ENCODE measurements at regions of chr11 and their contacts with region 1.

Region 1: GRCh38 chr11:72585762-72586311 is 88.4 kb downstream of the PDE2A start:
- DNase-seq: peak; percentile 60 to 75 (median 69)
- H3K4me3 ChIP-seq: no peak overlapping the region
- H3K27ac ChIP-seq: no peak overlapping the region
- H3K4me1 ChIP-seq: no peaks in the 10 kb centered on the region
- H3K27me3 ChIP-seq: no peaks in the 10 kb centered on the region
- CTCF ChIP-seq: peak; percentile 78 to 91 (median 89)
- EP300 ChIP-seq: no peak
- POLR2A ChIP-seq: peak; percentile 21

Region 2: DNA sequence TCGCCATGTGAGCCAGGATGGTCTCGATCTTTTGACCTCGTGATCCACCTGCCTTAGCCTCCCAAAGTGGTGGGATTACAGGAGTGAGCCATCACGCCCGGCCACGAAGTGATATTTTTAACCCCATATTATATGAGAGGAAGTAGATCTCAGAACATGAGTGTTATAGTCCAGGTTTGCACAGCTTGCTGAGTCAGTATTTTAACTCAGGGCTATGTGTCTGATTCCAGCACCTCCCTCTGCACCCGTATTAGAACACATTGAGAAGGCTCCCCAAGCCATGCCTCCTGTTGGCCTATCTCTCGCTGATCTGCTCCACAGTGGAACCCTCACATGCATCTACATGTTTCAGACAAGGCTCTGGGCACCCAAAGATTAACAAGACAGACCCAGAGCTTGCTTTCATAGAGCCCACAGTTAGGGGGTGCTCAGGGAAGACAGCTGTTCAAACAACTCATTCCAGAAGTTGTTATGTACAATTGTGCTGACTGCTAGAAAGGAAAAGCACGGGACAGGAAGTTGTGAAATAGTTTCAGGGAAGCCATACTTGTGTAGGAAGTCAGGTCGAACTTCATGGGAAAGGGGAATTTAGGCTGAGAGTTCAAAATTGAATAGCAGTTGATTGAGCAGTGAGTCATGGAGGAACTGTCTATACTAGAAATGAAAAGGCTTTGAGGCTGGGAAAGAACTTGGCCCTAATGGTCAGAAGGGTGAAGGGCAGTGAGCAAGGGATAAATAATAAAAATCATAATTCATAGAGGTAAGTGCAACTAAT is 102.2 kb before region 1 on chr11:
- intact Hi-C with region 1: loop called in 1 of 4 experiments (anchors 10 kb)
- DNase-seq: no peak
- H3K4me3 ChIP-seq: no peak overlapping the region
- H3K27ac ChIP-seq: no peak overlapping the region
- H3K4me1 ChIP-seq: no peaks in the 10 kb centered on the region
- H3K27me3 ChIP-seq: no peaks in the 10 kb centered on the region
- CTCF ChIP-seq: no peak
- EP300 ChIP-seq: peak; percentile 25
- POLR2A ChIP-seq: no peak

Region 3: GRCh38 chr11:72511393-72512047 is 74.3 kb before region 1 on chr11:
- intact Hi-C with region 1: no loop called
- DNase-seq: no peak
- H3K4me3 ChIP-seq: no peak overlapping the region
- H3K27ac ChIP-seq: no peak overlapping the region
- H3K4me1 ChIP-seq: no peaks in the 10 kb centered on the region
- H3K27me3 ChIP-seq: no peaks in the 10 kb centered on the region
- CTCF ChIP-seq: no peak
- EP300 ChIP-seq: no peak
- POLR2A ChIP-seq: no peak

Region 4: GRCh38 chr11:72642884-72643511 is 57.2 kb after region 1 on chr11:
- intact Hi-C with region 1: loop called (anchors 1 to 5 kb)
- DNase-seq: peak; percentile 48 to 80 (median 67)
- H3K4me3 ChIP-seq: peak overlapping the region; percentile 36
- H3K27ac ChIP-seq: no peak overlapping the region
- H3K4me1 ChIP-seq: peaks cover 3% of the 10 kb centered on the region
- H3K27me3 ChIP-seq: no peaks in the 10 kb centered on the region
- CTCF ChIP-seq: peak; percentile 92 to 99 (median 96)
- EP300 ChIP-seq: no peak
- POLR2A ChIP-seq: no peak

Region 5: DNA sequence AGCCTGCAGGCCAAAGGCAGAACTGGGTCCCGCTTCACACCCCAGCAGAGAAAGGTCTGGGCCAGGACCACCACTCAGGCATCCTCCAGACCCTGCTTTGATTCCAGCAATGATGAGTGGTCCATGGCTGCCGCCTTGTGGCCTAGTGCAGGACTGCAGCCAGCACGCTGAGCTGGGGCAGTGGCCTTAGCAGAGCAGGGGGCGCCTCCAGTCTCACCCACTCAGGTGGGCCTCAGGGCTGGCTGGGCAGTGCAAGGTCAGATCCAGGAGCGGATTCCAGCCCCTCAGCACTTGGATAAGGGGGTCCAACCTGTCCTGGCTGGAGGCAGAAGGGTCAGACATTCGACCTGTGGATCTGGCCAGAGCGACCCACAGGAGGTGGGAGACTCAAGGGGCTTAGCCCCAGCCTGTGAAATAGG is 98.0 kb after region 1 on chr11:
- intact Hi-C with region 1: loop called in 2 of 4 experiments (anchors 5 kb)
- DNase-seq: peak; percentile 49 to 82 (median 72)
- H3K4me3 ChIP-seq: no peak overlapping the region
- H3K27ac ChIP-seq: no peak overlapping the region
- H3K4me1 ChIP-seq: no peaks in the 10 kb centered on the region
- H3K27me3 ChIP-seq: no peaks in the 10 kb centered on the region
- CTCF ChIP-seq: peak; percentile 61 to 92 (median 86)
- EP300 ChIP-seq: no peak
- POLR2A ChIP-seq: no peak

Region 6: GRCh38 chr11:72781313-72782050 is 195.6 kb after region 1 on chr11:
- intact Hi-C with region 1: loop called in 1 of 4 experiments (anchors 10 kb)
- DNase-seq: peak in 4 of 5 donors; percentile 35 to 59 (median 48)
- H3K4me3 ChIP-seq: peak overlapping the region; percentile 94
- H3K27ac ChIP-seq: peak overlapping the region; percentile 26 to 78
- H3K4me1 ChIP-seq: peaks cover 5% of the 10 kb centered on the region
- H3K27me3 ChIP-seq: no peaks in the 10 kb centered on the region
- CTCF ChIP-seq: no peak
- EP300 ChIP-seq: no peak
- POLR2A ChIP-seq: no peak

Measured in ovary (tissue), 10 donors.